ENCODE measurements at regions of chr5 and their contacts with region 1.

Region 1: GRCh38 chr5:93582677-93583438 is at the start of gene NR2F1:
- DNase-seq: peak; percentile 92
- H3K4me3 Mint-ChIP-seq: no peak within 1 kb of the TSS
- H3K27ac Mint-ChIP-seq: no peak within 1 kb of the TSS
- H3K4me1 Mint-ChIP-seq: peaks cover 11% of the 10 kb centered on the region
- H3K27me3 Mint-ChIP-seq: no peaks in the 10 kb centered on the region
- CTCF ChIP-seq: no peak
- total RNA-seq, gene NR2F1: 1.4 and 1.7 TPM in 2 replicates

Region 2: DNA sequence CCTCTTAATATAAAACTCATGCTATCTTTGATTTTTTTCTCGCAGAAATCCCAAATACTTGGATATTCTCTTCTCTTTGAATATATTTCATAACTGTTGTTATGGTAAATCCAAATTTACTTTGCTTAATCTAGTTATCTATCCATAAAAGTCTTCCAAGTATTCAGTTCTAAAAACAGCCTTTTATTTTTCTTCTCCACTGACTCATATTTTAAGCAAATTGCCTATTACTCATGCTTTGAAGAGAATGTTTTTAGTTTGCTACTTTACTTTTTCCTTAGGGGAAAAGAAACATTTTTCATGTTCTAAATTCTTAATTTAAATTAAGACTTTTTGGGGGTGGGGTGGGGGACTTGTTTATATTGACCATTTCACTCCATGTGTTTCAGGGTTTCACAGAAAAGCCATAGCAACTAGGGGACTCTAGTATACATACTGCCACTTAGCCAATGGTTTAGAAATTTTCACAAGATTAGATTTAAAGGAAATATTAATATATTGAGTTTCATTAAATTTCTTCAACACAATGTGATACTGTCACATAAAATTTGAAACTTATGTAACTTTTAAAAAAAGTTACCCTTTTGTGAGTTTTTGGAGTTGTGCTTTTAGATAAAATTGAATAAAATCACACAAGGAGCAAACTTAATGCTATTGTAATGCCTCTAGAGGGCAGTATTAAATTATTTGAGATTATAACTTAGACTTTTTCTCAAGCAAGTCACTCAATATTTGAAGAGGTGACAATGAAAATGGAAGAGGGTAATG is 1653.9 kb before region 1 on chr5:
- CTCF ChIA-PET with region 1: no interaction called
- POLR2A ChIA-PET with region 1: no interaction called
- intact Hi-C with region 1: loop called (anchors 2 kb)
- DNase-seq: peak; percentile 11
- H3K4me3 Mint-ChIP-seq: no peak overlapping the region
- H3K27ac Mint-ChIP-seq: no peak overlapping the region
- H3K4me1 Mint-ChIP-seq: no peaks in the 10 kb centered on the region
- H3K27me3 Mint-ChIP-seq: peaks cover 52% of the 10 kb centered on the region
- CTCF ChIP-seq: peak; percentile 31

Region 3: GRCh38 chr5:92552206-92553160 is 1030.4 kb before region 1 on chr5:
- CTCF ChIA-PET with region 1: no interaction called
- POLR2A ChIA-PET with region 1: no interaction called
- intact Hi-C with region 1: loop called (anchors 5 kb)
- DNase-seq: peak; percentile 93
- H3K4me3 Mint-ChIP-seq: peak overlapping the region; percentile 61
- H3K27ac Mint-ChIP-seq: peak overlapping the region; percentile 98
- H3K4me1 Mint-ChIP-seq: peaks cover 13% of the 10 kb centered on the region
- H3K27me3 Mint-ChIP-seq: no peaks in the 10 kb centered on the region
- CTCF ChIP-seq: no peak

Region 4: DNA sequence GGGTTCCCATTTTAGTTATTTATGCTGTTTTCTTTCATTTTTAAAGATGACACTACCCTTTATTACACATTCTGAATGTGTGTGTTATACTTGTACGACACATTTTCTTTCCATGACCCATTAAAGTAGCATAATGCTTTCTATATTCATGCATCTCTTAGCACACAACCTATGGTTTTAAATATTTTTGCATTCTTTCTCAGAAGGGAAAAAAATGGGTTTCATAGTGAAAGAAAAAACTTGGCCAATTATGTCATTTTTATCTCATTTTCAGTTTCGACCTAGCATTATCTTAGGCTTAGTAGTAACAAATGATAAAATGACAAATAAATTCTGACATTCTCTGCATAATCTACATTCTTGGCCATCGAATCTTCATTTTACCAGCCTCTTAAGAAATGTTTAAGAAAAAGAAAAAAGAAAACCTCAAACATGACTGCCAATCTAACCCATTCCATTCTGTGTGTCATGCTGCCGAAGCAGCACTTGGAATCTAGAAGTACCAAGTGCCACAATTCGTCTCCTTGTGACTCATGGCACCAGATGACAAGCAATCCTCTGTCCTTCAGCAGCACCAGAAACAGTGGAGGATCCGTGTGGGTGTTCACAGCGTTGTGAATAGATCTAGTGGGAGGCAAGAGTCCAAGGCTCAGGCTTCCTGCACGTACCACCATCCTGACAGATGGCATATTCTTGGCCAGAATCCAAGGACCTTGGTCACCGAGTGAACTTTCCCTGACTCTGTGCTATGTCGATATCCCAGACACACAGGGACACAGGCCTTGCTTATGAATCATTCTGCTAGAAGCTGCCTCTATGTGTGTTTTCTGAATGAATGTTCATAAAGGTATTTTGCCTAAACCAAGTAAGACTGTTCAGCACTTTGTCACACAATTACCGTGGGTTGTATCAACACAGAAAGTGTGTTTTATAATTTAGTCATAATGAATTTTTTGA is 504.5 kb before region 1 on chr5:
- CTCF ChIA-PET with region 1: interaction called, 4 read pairs
- POLR2A ChIA-PET with region 1: no interaction called
- intact Hi-C with region 1: loop called (anchors 5 kb)
- DNase-seq: peak; percentile 90
- H3K4me3 Mint-ChIP-seq: peak overlapping the region; percentile 55
- H3K27ac Mint-ChIP-seq: peak overlapping the region; percentile 6
- H3K4me1 Mint-ChIP-seq: peaks cover 15% of the 10 kb centered on the region
- H3K27me3 Mint-ChIP-seq: no peaks in the 10 kb centered on the region
- CTCF ChIP-seq: no peak

Region 5: DNA sequence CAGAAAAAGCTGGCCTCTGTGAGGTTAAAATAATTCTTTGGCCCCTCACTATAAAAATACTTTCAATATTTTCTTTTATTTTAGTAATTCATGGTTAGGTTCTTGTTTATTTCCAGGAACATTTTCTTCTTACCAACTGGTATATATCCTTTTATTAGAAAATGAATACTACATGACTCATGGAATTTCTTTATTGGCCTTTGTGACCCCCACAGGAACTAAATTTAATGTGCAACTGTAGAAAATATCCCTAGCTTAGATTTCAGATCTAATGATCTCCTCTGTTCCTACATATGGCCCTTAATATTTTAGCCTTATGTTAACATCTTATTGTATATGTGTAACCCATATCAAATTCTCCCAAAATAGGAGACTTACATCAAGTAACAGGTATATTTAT is 431.7 kb before region 1 on chr5:
- CTCF ChIA-PET with region 1: interaction called, 4 read pairs
- POLR2A ChIA-PET with region 1: interaction called, 3 read pairs
- intact Hi-C with region 1: loop called (anchors 2 kb)
- DNase-seq: peak; percentile 13
- H3K4me3 Mint-ChIP-seq: no peak overlapping the region
- H3K27ac Mint-ChIP-seq: no peak overlapping the region
- H3K4me1 Mint-ChIP-seq: peaks cover 10% of the 10 kb centered on the region
- H3K27me3 Mint-ChIP-seq: no peaks in the 10 kb centered on the region
- CTCF ChIP-seq: no peak

Region 6: DNA sequence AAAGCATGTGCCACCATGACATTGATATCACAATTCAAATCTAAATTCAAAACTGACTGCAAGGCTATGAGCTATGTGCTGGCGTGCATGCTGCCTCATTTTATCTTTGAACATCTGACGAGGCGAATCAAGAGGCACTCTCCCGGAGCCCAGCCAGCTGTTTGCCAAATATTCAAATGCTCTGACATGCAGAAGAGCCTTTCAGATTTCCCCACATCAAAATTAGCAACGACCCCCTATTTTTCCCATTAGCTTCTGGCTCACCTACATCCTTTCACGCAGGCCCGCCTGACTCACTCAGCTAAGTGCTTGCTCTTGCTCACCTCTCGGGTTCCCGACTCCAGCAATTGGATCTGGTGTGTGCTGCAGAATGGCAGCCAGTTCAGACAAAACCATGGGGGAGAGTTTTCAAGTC is 160.9 kb before region 1 on chr5:
- CTCF ChIA-PET with region 1: no interaction called
- POLR2A ChIA-PET with region 1: no interaction called
- intact Hi-C with region 1: no loop called
- DNase-seq: no peak
- H3K4me3 Mint-ChIP-seq: no peak overlapping the region
- H3K27ac Mint-ChIP-seq: no peak overlapping the region
- H3K4me1 Mint-ChIP-seq: no peaks in the 10 kb centered on the region
- H3K27me3 Mint-ChIP-seq: no peaks in the 10 kb centered on the region
- CTCF ChIP-seq: no peak

Region 7: GRCh38 chr5:93607367-93608258 is 24.8 kb after region 1 on chr5:
- CTCF ChIA-PET with region 1: interaction called, 13 read pairs
- POLR2A ChIA-PET with region 1: no interaction called
- intact Hi-C with region 1: loop called (anchors 2 kb)
- DNase-seq: peak; percentile 62
- H3K4me3 Mint-ChIP-seq: no peak overlapping the region
- H3K27ac Mint-ChIP-seq: no peak overlapping the region
- H3K4me1 Mint-ChIP-seq: peaks cover 10% of the 10 kb centered on the region
- H3K27me3 Mint-ChIP-seq: peaks cover 80% of the 10 kb centered on the region
- CTCF ChIP-seq: peak; percentile 58

Region 8: DNA sequence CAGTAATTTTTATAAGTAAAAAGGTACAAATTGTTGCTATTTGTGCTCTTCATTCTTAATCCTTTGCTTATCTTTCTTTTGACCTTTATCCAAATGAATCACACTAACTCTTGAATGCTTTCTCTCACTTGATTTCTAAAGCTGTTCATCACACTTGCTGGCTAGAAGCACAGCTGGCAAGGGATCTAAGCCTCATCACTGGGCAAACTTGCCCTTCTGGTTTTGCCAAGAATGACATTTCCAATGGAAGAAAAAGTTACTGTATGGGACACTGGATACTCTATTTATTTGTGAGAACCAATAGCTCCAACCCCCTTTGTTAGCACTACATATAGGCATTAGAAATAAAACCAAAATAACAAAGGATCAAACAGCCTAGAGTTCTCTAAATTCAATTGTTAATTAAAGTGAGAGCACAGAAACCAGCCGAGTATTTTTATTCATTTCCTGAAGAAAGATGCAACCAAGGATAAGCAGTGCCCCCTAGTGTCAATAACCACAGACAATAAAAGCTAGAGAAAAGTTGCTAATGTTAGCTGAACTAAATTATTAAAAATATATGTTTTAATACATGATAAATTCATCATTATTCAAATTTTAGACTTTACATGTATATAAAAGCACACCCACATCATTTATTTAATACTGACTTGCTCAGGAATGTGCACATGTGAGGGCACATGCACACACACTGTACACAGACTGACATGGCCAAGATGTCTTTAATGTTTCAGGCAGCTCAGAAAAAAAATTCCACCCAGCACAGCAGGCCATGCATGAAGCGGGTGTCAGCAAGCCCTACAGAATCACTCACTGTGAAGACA is 218.3 kb after region 1 on chr5:
- CTCF ChIA-PET with region 1: interaction called, 16 read pairs
- POLR2A ChIA-PET with region 1: interaction called, 5 read pairs
- intact Hi-C with region 1: loop called (anchors 1 kb)
- DNase-seq: peak; percentile 69
- H3K4me3 Mint-ChIP-seq: no peak overlapping the region
- H3K27ac Mint-ChIP-seq: no peak overlapping the region
- H3K4me1 Mint-ChIP-seq: peaks cover 5% of the 10 kb centered on the region
- H3K27me3 Mint-ChIP-seq: no peaks in the 10 kb centered on the region
- CTCF ChIP-seq: peak; percentile 80

Measured in MCF 10A (cell line).